Posterior vena cava (tissue), 2 donors: ENCODE measurements at regions of chr6 and their contacts with region 1.

Region 1: GRCh38 chr6:46898006-46898405 is 23.7 kb downstream of the ADGRF5 start:
- DNase-seq: no peak

Region 2: GRCh38 chr6:46954837-46955451 is 56.9 kb after region 1 on chr6:
- intact Hi-C with region 1: no loop called
- DNase-seq: no peak

Region 3: GRCh38 chr6:48826901-48827701 is 1929.1 kb after region 1 on chr6:
- intact Hi-C with region 1: loop called in 1 of 2 experiments (anchors 5 kb)
- DNase-seq: peak; percentile 86